Activated naive CD4-positive, alpha-beta T cell treated with anti-CD3 and anti-CD28 coated beads, Interleukin-2, amount 10 ng/mL, durations not matched to agents 7 days and 5 days (primary cell): ENCODE measurements at regions of chr12 and their contacts with region 1.

Region 1: GRCh38 chr12:56189176-56189917 is at the start of gene SMARCC2:
- DNase-seq: peak; percentile 91
- H3K4me3 Mint-ChIP-seq: peak within 1 kb of the TSS; percentile 94
- H3K27ac Mint-ChIP-seq: peak within 1 kb of the TSS; percentile 96
- H3K4me1 Mint-ChIP-seq: peaks cover 55% of the 10 kb centered on the region
- H3K27me3 Mint-ChIP-seq: peaks cover 7% of the 10 kb centered on the region

Region 2: GRCh38 chr12:55847603-55848291 is 341.6 kb before region 1 on chr12:
- CTCF ChIA-PET with region 1: no interaction called
- DNase-seq: no peak
- H3K4me3 Mint-ChIP-seq: no peak overlapping the region
- H3K27ac Mint-ChIP-seq: no peak overlapping the region
- H3K4me1 Mint-ChIP-seq: peaks cover 3% of the 10 kb centered on the region
- H3K27me3 Mint-ChIP-seq: peaks cover 62% of the 10 kb centered on the region

Region 3: GRCh38 chr12:56097738-56098137 is 91.6 kb before region 1 on chr12:
- CTCF ChIA-PET with region 1: no interaction called
- DNase-seq: no peak
- H3K4me3 Mint-ChIP-seq: no peak overlapping the region
- H3K27ac Mint-ChIP-seq: no peak overlapping the region
- H3K4me1 Mint-ChIP-seq: peaks cover 20% of the 10 kb centered on the region
- H3K27me3 Mint-ChIP-seq: peaks cover 57% of the 10 kb centered on the region

Region 4: DNA sequence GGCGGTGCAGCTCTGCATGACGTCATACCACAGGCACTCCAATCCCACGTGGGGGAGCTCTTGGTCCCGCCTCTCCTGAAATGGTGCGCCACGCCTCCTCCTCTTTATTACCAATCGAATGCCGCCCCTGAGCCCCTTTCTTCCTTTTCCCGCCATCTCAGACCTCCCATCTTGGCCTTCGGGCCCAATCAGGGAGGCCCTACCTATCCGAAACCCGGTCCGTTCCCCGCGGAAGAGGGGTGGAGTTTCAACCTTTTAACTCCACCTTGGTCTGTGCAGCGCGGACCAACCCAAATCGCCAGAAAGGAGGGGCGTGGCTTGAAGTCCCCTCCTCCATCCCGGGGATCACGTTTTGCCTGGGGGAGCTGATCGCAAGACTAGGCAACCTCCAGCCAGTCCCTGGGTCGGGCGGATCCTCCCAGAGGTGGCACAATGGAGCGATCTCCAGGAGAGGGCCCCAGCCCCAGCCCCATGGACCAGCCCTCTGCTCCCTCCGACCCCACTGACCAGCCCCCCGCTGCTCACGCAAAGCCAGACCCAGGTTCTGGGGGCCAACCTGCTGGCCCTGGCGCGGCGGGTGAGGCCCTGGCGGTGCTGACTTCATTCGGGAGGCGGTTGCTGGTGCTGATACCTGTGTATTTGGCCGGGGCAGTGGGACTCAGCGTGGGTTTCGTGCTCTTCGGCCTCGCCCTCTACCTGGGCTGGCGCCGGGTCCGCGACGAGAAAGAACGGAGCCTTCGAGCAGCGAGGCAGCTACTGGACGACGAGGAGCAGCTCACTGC is 61.3 kb before region 1 on chr12 and contains the start of gene ESYT1:
- CTCF ChIA-PET with region 1: interaction called, 51 read pairs
- DNase-seq: peak; percentile 99
- H3K4me3 Mint-ChIP-seq: peak within 1 kb of the TSS; percentile 97
- H3K27ac Mint-ChIP-seq: peak within 1 kb of the TSS; percentile 94
- H3K4me1 Mint-ChIP-seq: peaks cover 78% of the 10 kb centered on the region
- H3K27me3 Mint-ChIP-seq: peaks cover 3% of the 10 kb centered on the region

Region 5: DNA sequence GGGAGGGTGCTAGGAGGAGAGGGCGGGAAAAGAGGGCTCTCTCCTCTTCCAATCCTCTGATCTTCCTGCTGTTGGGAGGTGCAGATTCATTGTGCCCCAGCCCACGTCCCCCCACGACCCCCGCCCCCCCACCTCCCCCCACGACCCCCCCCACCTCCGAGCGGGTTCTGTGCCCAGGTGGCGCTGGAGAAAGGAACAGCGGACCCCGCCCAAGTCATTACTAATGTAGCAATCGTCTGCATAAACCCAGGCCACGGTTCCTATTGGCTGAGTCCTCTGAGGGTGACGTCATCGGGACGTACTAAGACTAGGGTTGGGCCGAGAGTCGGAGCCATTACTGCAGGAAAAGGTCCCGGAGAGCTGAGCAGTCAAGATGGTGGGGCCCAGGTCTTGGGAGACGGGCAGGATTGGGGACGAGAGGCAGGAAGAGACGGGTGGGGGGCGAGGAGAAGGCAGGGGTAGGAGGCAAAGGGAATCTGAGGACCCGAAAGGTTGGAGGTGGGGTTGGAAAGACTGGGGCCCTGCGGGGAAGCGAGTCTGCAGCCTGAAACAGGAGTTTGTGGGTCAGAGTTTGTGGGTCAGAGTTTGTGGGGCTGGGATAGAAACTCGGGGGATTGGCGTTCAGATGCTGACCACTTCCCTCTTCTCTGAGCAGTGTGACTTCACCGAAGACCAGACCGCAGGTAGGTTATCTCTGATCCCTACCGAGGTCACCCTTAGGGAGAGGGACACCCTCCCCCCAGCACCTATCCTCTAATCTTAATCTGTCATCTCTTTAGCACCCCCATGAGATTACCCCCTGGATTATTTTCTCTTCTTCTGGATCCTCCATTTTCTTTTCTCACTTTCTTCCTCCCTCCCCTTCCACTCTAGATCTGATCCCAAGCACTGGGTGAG is 31.1 kb before region 1 on chr12 and contains the start of gene MYL6:
- CTCF ChIA-PET with region 1: interaction called, 14 read pairs
- DNase-seq: peak; percentile 97
- H3K4me3 Mint-ChIP-seq: peak within 1 kb of the TSS; percentile 95
- H3K27ac Mint-ChIP-seq: peak within 1 kb of the TSS; percentile 94
- H3K4me1 Mint-ChIP-seq: peaks cover 51% of the 10 kb centered on the region
- H3K27me3 Mint-ChIP-seq: no peaks in the 10 kb centered on the region

Region 6: DNA sequence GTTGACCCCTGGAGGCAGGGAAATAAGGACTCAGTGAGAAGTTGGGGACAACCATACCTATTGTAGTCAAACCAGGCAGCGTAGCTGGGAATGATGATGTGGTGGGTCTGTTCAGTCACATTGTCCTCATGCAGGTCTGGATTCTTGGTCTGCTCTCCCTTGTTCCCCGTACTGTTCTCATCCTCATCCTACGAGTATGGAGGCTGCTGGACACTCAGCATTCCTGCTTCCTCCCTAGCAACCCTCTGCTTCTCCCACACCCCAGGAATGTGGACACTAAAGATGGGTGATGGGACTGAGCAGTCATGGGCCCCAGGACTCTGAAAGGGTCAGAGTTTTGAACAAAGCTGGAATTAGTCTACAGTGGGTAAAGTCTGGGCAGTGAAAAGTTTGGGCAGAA is 11.0 kb before region 1 on chr12:
- CTCF ChIA-PET with region 1: interaction called, 11 read pairs
- DNase-seq: no peak
- H3K4me3 Mint-ChIP-seq: no peak overlapping the region
- H3K27ac Mint-ChIP-seq: no peak overlapping the region
- H3K4me1 Mint-ChIP-seq: no peaks in the 10 kb centered on the region
- H3K27me3 Mint-ChIP-seq: no peaks in the 10 kb centered on the region

Region 7: DNA sequence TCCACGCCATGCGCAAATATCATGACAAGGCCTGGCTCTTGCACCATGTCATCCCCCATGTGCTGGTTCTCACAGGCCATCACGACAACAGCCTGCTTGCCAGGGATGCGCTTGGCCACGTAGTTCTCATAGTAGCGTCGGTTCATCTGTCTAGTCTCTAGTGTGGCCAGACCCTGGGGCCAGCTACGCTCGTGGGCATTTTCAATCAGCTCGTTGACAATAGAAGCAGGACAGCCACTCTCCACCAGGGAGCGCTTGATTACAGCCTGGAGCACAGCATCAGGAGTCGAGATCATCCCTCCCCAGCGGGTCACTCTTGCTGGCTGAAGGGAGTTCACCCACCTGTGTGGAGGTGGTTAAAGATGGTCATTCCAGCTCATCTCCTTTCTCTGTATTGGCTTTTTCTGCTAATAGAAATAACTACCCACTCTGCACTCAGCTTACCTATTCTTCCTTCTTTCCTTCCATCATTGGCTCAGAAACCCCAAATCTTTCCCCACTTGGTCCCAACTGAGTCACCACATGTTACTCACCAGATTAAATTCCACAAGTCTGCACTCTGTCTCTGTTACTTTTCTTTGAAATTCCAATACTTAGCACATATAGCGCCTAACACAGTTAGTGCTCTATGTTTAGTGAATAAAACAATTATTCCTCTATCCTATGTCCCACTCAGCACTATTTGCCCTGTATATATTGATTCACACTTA is 17.3 kb after region 1 on chr12:
- CTCF ChIA-PET with region 1: interaction called, 10 read pairs
- DNase-seq: peak; percentile 65
- H3K4me3 Mint-ChIP-seq: no peak overlapping the region
- H3K27ac Mint-ChIP-seq: no peak overlapping the region
- H3K4me1 Mint-ChIP-seq: no peaks in the 10 kb centered on the region
- H3K27me3 Mint-ChIP-seq: no peaks in the 10 kb centered on the region

Region 8: GRCh38 chr12:56221527-56222387 is 32.4 kb after region 1 on chr12 and contains the start of gene RNF41:
- CTCF ChIA-PET with region 1: interaction called, 17 read pairs
- DNase-seq: peak; percentile 95
- H3K4me3 Mint-ChIP-seq: peak within 1 kb of the TSS; percentile 99
- H3K27ac Mint-ChIP-seq: peak within 1 kb of the TSS; percentile 93
- H3K4me1 Mint-ChIP-seq: peaks cover 53% of the 10 kb centered on the region
- H3K27me3 Mint-ChIP-seq: no peaks in the 10 kb centered on the region

Region 9: DNA sequence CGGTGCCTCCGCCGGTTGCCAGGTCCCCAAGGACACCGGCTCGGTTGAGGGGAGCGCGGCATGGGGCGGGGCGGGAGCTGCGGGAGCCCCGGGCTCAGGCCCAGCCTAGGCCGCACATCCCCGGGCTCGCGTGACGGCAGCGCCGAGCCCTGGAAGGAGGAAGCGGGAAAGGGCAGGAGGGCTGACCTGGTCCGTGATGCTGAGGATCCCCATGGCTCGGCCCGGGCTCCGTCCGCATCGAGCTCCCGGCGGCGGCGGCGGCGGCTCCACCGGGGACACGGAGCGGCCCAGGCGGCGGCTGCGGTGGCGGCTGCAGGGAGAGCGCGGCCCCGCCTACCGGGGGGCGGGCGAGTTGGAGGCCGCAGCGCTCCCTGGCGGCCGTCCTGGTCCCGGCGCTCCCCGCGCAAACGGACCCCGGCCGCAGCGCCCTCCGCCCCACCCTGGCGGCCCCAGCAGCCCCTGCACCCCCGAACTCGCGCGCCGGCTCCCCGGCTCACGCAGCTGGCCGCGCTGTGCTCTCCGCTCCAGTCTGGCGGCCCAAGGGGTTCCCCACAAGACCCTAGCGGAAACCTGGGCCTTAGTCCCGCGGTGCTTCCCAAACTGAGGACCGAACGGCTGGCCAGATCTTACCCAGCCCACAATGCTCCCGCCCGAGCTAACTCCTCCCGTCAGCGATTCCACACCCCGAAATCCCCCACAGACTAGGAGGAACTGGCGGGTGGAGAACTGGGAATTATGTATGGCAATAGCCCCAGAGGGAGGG is 68.9 kb after region 1 on chr12 and contains the start of gene ANKRD52:
- CTCF ChIA-PET with region 1: interaction called, 33 read pairs
- DNase-seq: peak; percentile 84
- H3K4me3 Mint-ChIP-seq: peak within 1 kb of the TSS; percentile 82
- H3K27ac Mint-ChIP-seq: peak within 1 kb of the TSS; percentile 85
- H3K4me1 Mint-ChIP-seq: peaks cover 19% of the 10 kb centered on the region
- H3K27me3 Mint-ChIP-seq: peaks cover 5% of the 10 kb centered on the region

Region 10: GRCh38 chr12:56286044-56286830 is 96.9 kb after region 1 on chr12:
- CTCF ChIA-PET with region 1: no interaction called
- DNase-seq: no peak
- H3K4me3 Mint-ChIP-seq: no peak overlapping the region
- H3K27ac Mint-ChIP-seq: no peak overlapping the region
- H3K4me1 Mint-ChIP-seq: peaks cover 25% of the 10 kb centered on the region
- H3K27me3 Mint-ChIP-seq: no peaks in the 10 kb centered on the region